Pancreas (tissue), 10 donors: ENCODE measurements at regions of chr5 and their contacts with region 1.

Region 1: GRCh38 chr5:39063037-39063436 is 11.2 kb downstream of the RICTOR start:
- DNase-seq: no peak
- ATAC-seq: peak in 3 of 4 donors; percentile 28 to 58 (median 46)
- H3K4me3 ChIP-seq: no peak overlapping the region
- H3K27ac ChIP-seq: no peak overlapping the region
- H3K4me1 ChIP-seq: peaks cover 15 to 24% (median 22%) of the 10 kb centered on the region in 3 donors
- H3K27me3 ChIP-seq: no peaks in the 10 kb centered on the region
- CTCF ChIP-seq: no peak

Region 2: DNA sequence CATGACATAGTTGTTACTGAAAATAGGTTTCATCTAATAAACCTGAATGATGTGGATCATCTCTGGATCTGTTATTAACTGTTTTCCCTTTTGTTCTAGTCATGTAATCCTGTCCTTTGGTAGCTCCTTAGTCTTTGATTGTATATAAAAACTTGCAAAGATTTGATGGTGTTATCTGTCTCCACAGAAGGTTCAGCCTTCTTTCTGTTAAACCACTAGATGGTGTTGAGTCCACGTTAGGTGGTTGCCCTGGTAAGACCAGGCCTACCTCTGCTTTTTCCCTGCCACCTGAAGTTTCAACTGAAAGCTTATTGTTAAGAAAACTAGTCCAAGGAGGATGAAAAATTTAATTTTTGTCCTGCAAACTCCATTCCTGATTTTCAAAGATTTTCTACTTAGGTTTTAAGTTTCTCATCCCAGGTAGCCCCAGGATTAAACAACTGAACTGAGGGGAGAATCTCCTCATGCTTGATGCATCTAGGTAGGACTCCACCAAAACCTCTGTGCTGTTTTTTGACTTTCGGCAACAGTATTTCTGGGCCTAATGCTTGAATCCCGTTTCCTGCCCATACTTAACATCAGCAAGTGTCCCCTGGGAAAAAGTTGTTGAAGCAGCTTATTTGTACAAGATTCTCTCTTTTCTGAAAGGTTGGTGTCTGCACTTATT is 57.3 kb before region 1 on chr5:
- intact Hi-C with region 1: loop called in 1 of 3 experiments (anchors 10 kb)
- DNase-seq: no peak
- ATAC-seq: peak in 3 of 4 donors; percentile 71 to 80 (median 73)
- H3K4me3 ChIP-seq: no peak overlapping the region
- H3K27ac ChIP-seq: no peak overlapping the region
- H3K4me1 ChIP-seq: no peaks in the 10 kb centered on the region
- H3K27me3 ChIP-seq: no peaks in the 10 kb centered on the region
- CTCF ChIP-seq: peak in 1 of 4 donors; percentile 21

Region 3: GRCh38 chr5:39187831-39188731 is 125.0 kb after region 1 on chr5:
- intact Hi-C with region 1: no loop called
- DNase-seq: no peak
- ATAC-seq: no peak
- H3K4me3 ChIP-seq: no peak overlapping the region
- H3K27ac ChIP-seq: no peak overlapping the region
- H3K4me1 ChIP-seq: peaks cover 0 to 3% (median 0%) of the 10 kb centered on the region in 3 donors
- H3K27me3 ChIP-seq: peaks cover 0 to 4% (median 0%) of the 10 kb centered on the region in 4 donors
- CTCF ChIP-seq: no peak